Endothelial cell of umbilical vein (primary cell): ENCODE measurements at regions of chr3 and their contacts with region 1.

Region 1: GRCh38 chr3:161890147-161890625 is 393.6 kb downstream of the OTOL1 start:
- DNase-seq: peak; percentile 18
- H3K4me3 ChIP-seq: no peak overlapping the region
- H3K27ac ChIP-seq: peak overlapping the region; percentile 33
- H3K4me1 ChIP-seq: no peaks in the 10 kb centered on the region
- H3K27me3 ChIP-seq: no peaks in the 10 kb centered on the region
- CTCF ChIP-seq: no peak
- POLR2A ChIP-seq: no peak

Region 2: GRCh38 chr3:161914737-161915417 is 24.7 kb after region 1 on chr3:
- CTCF ChIA-PET with region 1: no interaction called
- POLR2A ChIA-PET with region 1: no interaction called
- dilution Hi-C with region 1: no loop called
- intact Hi-C with region 1: loop called (anchors 2 kb)
- DNase-seq: no peak
- H3K4me3 ChIP-seq: no peak overlapping the region
- H3K27ac ChIP-seq: no peak overlapping the region
- H3K4me1 ChIP-seq: no peaks in the 10 kb centered on the region
- H3K27me3 ChIP-seq: no peaks in the 10 kb centered on the region
- CTCF ChIP-seq: no peak
- POLR2A ChIP-seq: no peak